Activated naive CD4-positive, alpha-beta T cell treated with anti-CD3 and anti-CD28 coated beads, Interleukin-2, amount 10 ng/mL, durations not matched to agents 7 days and 5 days (primary cell): ENCODE measurements at regions of chr3 and their contacts with region 1.

Region 1: DNA sequence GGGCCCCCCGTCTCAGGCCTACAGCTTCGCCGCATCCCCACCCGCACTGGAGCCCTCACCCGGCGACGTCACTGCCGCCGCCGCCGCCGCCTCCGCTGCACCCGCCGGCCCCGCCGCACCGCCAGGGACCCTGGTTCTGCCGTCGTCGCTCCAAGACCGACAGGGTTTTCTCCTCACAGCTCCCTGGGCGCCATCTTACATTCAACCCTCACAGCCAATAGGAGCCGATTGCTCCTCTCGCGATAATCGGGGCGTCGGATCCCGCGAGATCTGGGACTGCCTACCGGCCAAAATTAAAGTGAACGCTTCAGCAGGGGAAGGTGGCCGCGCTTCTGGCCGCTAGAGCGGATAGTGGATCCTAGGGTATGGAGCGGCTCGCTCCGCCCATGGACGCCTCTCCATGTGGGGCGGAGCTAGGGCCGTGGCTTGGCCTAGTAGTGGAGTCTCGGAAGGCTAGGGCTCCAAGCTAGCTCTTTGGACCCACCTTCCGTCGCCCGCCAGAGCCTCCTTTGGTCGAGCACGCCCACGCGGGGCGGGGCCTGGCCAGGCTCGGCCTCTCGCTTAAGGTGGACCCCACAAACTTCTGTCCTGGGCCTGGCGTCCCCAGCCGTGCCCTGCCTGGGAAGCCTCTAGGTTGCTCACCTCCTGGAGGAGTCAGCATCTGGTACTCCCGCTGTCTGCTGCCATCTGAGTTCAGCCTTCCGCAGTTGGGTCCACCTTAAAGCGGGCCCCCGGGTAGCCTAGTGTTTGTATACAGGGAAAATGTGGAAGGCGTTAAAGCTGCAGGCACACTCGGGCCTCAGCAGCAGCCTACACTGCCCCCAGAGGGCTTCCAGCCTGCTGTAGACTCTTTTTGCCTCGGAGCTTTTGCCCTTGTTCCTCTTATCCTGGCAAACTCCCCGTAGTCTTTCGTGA is at the start of gene QRICH1:
- DNase-seq: peak; percentile 98
- H3K4me3 Mint-ChIP-seq: peak within 1 kb of the TSS; percentile 88
- H3K27ac Mint-ChIP-seq: peak within 1 kb of the TSS; percentile 97
- H3K4me1 Mint-ChIP-seq: peaks cover 42% of the 10 kb centered on the region
- H3K27me3 Mint-ChIP-seq: no peaks in the 10 kb centered on the region

Region 2: DNA sequence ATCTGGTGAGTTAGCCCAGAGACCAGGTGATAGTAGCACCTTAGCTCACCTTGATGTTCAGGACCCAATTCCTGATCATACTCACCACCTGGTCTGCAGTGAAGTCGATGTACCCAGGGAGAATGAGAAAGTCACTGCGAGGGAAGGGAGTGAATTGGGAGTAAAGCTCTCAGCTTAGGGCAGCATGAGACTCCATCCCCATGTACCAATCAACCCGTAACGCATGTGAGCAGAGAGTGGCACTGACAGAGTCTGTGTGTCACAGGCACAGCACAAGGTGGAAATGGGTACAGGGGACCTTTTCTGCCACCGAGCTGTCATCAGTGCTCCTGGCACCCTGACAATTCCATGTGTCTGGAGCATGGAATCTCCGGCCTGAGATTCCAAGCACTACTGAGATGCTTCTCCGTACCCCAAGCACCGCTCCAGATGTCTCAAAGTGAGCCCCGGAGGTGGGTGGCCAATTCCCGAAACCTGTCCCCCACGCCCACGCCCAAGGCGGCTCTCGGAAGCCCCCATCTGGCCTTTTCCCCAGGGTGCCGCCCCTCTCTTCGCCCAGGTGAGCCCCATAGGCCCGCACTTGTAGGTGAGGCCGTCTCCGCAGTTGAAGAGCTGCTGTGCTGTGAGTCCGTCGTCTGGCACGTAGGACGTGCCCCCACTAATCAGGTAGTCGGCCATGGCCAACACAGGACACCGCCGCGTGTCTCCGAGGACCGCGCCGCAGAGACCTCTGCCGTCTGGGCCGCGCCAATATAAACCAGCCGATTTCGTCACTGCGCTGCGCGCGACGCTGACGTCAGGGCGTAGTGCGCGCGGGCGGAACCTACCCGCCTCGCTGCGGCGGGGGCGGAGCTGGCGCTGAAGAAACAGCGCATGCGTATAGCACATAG is 65.2 kb before region 1 on chr3 and contains the start of gene IMPDH2:
- CTCF ChIA-PET with region 1: interaction called, 10 read pairs
- DNase-seq: peak; percentile 94
- H3K4me3 Mint-ChIP-seq: peak within 1 kb of the TSS; percentile 85
- H3K27ac Mint-ChIP-seq: peak within 1 kb of the TSS; percentile 87
- H3K4me1 Mint-ChIP-seq: peaks cover 48% of the 10 kb centered on the region
- H3K27me3 Mint-ChIP-seq: no peaks in the 10 kb centered on the region

Region 3: GRCh38 chr3:49104483-49105291 is 10.6 kb after region 1 on chr3 and contains the start of gene QARS1:
- CTCF ChIA-PET with region 1: interaction called, 17 read pairs
- DNase-seq: peak; percentile 95
- H3K4me3 Mint-ChIP-seq: peak within 1 kb of the TSS; percentile 92
- H3K27ac Mint-ChIP-seq: peak within 1 kb of the TSS; percentile 95
- H3K4me1 Mint-ChIP-seq: peaks cover 35% of the 10 kb centered on the region
- H3K27me3 Mint-ChIP-seq: no peaks in the 10 kb centered on the region